AG04449 (cell line): ENCODE measurements at regions of chr20 and their contacts with region 1.

Region 1: DNA sequence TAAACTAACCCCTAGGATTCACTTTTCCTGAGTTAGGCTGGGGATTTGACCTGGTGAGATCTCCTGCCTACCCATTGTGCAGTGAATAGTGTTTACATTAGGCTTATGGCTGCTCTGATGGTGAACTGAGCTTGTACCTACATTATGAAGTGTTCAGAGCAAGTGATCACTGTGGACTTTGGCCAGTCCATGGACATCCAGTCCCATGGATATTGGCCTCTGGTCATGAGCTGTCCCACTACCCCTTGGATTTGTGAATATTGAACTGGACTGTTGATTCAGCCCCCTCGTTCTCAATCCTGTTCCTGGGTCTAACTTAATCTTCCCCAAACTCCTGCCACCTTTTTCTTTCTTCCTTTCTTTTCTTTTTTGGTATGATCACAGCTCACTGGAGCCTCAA is 13.8 kb downstream of the ASIP start:
- DNase-seq: no peak
- H3K4me3 ChIP-seq: no peak overlapping the region
- CTCF ChIP-seq: no peak

Region 2: DNA sequence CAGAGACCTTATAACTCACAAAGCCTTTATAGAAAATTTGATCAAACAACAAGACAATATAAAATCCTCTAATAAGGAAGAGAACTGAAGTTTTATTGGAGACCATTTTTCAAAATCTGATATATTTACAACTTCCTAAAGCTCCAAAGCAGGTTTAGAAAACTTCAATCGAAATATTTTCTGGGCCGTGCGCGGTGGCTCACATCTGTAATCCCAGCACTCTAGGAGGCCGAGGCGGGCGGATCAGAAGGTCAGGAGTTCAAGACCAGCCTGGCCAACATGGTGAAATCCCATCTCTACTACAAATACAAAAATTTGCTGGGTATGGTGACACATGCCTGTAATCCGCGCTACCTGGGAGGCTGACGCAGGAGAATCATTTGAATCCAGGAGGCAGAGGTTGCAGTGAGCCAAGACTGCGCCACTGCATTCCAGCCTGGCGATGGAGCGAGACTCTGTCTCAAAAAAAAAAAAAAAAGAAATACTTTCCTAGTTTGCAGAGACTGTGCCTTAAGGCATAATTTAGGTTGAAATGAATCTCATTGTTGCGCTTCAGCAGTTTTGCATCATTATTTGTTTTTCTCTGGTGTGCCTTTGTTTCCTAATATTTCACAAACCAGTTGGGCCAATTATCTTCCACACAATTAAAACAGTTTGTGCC is 74.4 kb before region 1 on chr20:
- CTCF ChIA-PET with region 1: no interaction called
- POLR2A ChIA-PET with region 1: no interaction called
- DNase-seq: no peak
- H3K4me3 ChIP-seq: no peak overlapping the region
- CTCF ChIP-seq: no peak

Region 3: DNA sequence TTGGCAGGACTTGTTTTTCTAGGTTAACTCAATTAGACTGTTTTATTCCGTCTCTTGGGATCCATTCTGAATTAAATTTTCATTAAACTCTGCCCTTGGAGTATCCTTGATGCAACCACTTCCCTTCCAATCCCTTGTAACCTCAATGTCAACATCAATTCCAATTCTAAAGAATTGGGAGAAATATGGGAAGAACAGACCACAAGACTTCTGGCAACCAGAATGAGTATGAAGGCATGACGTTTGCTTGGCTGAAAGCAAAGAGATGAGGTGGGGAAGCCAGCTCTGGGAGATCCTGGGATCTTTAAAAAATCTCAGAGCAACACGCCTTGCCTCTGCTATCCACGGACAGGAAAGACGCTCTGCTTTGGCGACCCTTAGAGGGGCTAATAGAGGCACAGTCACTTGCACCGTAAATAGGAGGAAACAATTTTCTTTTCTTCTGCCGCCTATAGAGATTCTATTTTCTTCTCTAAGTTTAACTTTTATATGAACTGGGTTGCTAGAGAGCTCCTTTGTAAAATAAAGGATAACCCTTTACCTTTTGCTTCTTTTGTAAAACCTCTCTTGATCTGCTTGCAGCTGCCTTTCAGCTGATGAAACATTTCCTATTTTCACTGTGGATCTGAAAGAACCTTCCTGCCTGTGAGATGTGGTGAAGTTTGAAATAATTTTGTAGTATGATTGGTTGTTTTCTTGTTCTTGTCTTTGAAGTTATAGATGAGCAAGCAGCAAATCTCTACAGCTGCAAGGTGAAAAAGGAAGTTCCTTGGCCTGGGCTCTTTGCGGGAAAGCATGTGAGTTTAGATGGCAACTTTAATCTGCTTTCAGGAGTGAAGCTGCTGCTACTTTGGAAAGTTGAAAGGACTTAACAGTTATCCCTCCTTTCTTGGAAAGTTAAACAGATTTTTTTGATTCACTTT is 14.0 kb before region 1 on chr20 and contains the start of gene ASIP:
- CTCF ChIA-PET with region 1: interaction called, 26 read pairs
- POLR2A ChIA-PET with region 1: no interaction called
- DNase-seq: no peak
- H3K4me3 ChIP-seq: no peak within 1 kb of the TSS
- CTCF ChIP-seq: no peak

Region 4: GRCh38 chr20:34268851-34269636 is 14.1 kb after region 1 on chr20:
- CTCF ChIA-PET with region 1: interaction called, 23 read pairs
- POLR2A ChIA-PET with region 1: no interaction called
- DNase-seq: no peak
- H3K4me3 ChIP-seq: peak overlapping the region; percentile 43
- CTCF ChIP-seq: peak; percentile 8